Activated B cell treated with CpG ODN at 0.5 μM for 24 hours (primary cell): ENCODE measurements at regions of chr3 and their contacts with region 1.

Region 1: GRCh38 chr3:13648060-13649001 is 99.4 kb downstream of the FBLN2 start:
- DNase-seq: peak; percentile 77
- ATAC-seq: peak; percentile 63
- H3K4me3 Mint-ChIP-seq: no peak overlapping the region
- H3K27ac Mint-ChIP-seq: no peak overlapping the region
- H3K4me1 Mint-ChIP-seq: peaks cover 18% of the 10 kb centered on the region
- H3K27me3 Mint-ChIP-seq: peaks cover 46% of the 10 kb centered on the region
- CTCF ChIP-seq: peak; percentile 98

Region 2: GRCh38 chr3:12868039-12869034 is 780.0 kb before region 1 on chr3:
- CTCF ChIA-PET with region 1: interaction called, 4 read pairs
- POLR2A ChIA-PET with region 1: no interaction called
- intact Hi-C with region 1: loop called (anchors 1 kb)
- DNase-seq: peak; percentile 59
- ATAC-seq: peak; percentile 81
- H3K4me3 Mint-ChIP-seq: peak overlapping the region; percentile 79
- H3K27ac Mint-ChIP-seq: peak overlapping the region; percentile 25
- H3K4me1 Mint-ChIP-seq: peaks cover 25% of the 10 kb centered on the region
- H3K27me3 Mint-ChIP-seq: peaks cover 3% of the 10 kb centered on the region
- CTCF ChIP-seq: peak; percentile 67

Region 3: GRCh38 chr3:13495921-13496723 is 152.2 kb before region 1 on chr3:
- CTCF ChIA-PET with region 1: interaction called, 198 read pairs
- POLR2A ChIA-PET with region 1: interaction called, 5 read pairs
- intact Hi-C with region 1: loop called (anchors 1 kb)
- DNase-seq: peak; percentile 53
- ATAC-seq: peak; percentile 91
- H3K4me3 Mint-ChIP-seq: no peak overlapping the region
- H3K27ac Mint-ChIP-seq: no peak overlapping the region
- H3K4me1 Mint-ChIP-seq: no peaks in the 10 kb centered on the region
- H3K27me3 Mint-ChIP-seq: peaks cover 1% of the 10 kb centered on the region
- CTCF ChIP-seq: peak; percentile 41